ENCODE measurements at regions of chr5 and their contacts with region 1.

Region 1: GRCh38 chr5:141992349-141992963 is 20.4 kb downstream of the GNPDA1 start:
- DNase-seq: peak in 5 of 10 donors; percentile 55 to 79 (median 69)

Region 2: GRCh38 chr5:141729387-141730006 is 263.0 kb before region 1 on chr5:
- intact Hi-C with region 1: no loop called
- DNase-seq: peak in 6 of 10 donors; percentile 18 to 82 (median 37)

Region 3: GRCh38 chr5:142145106-142145900 is 152.8 kb after region 1 on chr5:
- intact Hi-C with region 1: loop called (anchors 1 kb)
- DNase-seq: peak in 5 of 10 donors; percentile 36 to 55 (median 42)